Endothelial cell of umbilical vein (primary cell): ENCODE measurements at regions of chr4 and their contacts with region 1.

Region 1: DNA sequence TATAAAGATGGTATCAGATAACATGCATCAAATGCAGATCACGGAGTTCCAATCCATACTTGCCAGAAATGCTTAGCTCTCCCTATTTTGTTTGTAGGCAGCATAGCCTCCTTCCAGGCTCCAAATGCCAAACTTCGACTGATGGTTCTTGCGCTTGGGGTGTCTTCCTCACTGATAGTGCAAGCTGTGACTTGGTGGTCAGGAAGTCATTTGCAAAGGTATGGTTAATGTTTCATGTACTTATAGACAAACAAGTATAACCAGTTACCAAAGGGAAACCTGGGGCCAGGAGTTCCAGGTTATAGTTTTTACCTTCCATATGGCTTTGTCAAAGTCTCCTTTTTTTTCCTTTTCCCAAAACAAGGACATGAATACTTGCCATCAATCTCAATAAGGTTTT is 5.3 kb downstream of the CWH43 start:
- DNase-seq: no peak
- H3K4me3 ChIP-seq: no peak overlapping the region
- H3K27ac ChIP-seq: no peak overlapping the region
- H3K4me1 ChIP-seq: no peaks in the 10 kb centered on the region
- H3K27me3 ChIP-seq: peaks cover 17 to 24% of the 10 kb centered on the region in 2 experiments
- CTCF ChIP-seq: no peak
- POLR2A ChIP-seq: no peak

Region 2: DNA sequence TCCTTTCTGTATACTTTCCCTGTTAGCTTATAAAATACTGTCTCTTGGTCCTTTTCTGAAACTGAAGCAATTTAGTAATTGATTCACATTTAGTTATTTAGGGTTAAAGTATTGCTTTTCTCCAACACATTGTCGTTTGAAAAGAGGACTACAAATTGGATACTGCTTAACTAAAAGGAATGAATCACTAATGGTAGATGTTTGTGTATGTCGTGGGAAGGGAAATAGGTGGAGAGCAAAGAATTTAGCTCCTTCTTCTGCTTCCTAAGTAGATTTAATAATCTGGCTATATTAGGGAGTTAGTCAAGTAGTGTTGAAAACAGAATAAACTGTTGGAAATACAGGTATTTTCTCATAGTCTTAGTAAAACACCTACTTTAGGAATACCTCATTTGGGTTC is 622.1 kb before region 1 on chr4:
- CTCF ChIA-PET with region 1: no interaction called
- POLR2A ChIA-PET with region 1: no interaction called
- dilution Hi-C with region 1: no loop called
- intact Hi-C with region 1: loop called (anchors 5 kb)
- DNase-seq: peak; percentile 64
- H3K4me3 ChIP-seq: no peak overlapping the region
- H3K27ac ChIP-seq: no peak overlapping the region
- H3K4me1 ChIP-seq: no peaks in the 10 kb centered on the region
- H3K27me3 ChIP-seq: no peaks in the 10 kb centered on the region
- CTCF ChIP-seq: no peak
- POLR2A ChIP-seq: no peak

Region 3: GRCh38 chr4:48792348-48793006 is 198.9 kb before region 1 on chr4:
- CTCF ChIA-PET with region 1: no interaction called
- POLR2A ChIA-PET with region 1: no interaction called
- dilution Hi-C with region 1: no loop called
- intact Hi-C with region 1: no loop called
- DNase-seq: no peak
- H3K4me3 ChIP-seq: no peak overlapping the region
- H3K27ac ChIP-seq: no peak overlapping the region
- H3K4me1 ChIP-seq: no peaks in the 10 kb centered on the region
- H3K27me3 ChIP-seq: no peaks in the 10 kb centered on the region
- CTCF ChIP-seq: no peak
- POLR2A ChIP-seq: no peak

Region 4: DNA sequence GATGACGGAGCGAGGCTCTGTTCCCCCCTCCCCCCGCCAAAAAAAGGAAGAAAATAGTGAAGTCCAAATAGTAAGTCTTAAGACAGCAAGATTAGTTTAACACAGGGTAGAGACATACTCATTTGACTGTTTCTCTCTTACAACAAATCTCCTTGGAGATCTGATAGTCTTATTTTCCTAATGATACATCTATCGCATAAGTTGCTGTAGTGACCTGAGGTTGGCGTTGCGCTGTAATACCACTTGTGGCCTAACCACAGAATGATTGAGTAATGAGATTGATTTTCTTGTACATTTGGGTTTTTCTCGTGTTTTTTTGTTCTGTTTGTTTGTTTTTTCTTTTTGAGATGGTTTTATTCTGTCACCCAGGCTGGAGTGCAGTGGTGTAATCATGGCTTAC is 133.2 kb before region 1 on chr4:
- CTCF ChIA-PET with region 1: no interaction called
- POLR2A ChIA-PET with region 1: no interaction called
- dilution Hi-C with region 1: no loop called
- intact Hi-C with region 1: no loop called
- DNase-seq: no peak
- H3K4me3 ChIP-seq: no peak overlapping the region
- H3K27ac ChIP-seq: no peak overlapping the region
- H3K4me1 ChIP-seq: peaks cover 3% of the 10 kb centered on the region
- H3K27me3 ChIP-seq: no peaks in the 10 kb centered on the region
- CTCF ChIP-seq: no peak
- POLR2A ChIP-seq: no peak